CD8-positive, alpha-beta T cell (primary cell): ENCODE measurements at regions of chr18 and their contacts with region 1.

Region 1: DNA sequence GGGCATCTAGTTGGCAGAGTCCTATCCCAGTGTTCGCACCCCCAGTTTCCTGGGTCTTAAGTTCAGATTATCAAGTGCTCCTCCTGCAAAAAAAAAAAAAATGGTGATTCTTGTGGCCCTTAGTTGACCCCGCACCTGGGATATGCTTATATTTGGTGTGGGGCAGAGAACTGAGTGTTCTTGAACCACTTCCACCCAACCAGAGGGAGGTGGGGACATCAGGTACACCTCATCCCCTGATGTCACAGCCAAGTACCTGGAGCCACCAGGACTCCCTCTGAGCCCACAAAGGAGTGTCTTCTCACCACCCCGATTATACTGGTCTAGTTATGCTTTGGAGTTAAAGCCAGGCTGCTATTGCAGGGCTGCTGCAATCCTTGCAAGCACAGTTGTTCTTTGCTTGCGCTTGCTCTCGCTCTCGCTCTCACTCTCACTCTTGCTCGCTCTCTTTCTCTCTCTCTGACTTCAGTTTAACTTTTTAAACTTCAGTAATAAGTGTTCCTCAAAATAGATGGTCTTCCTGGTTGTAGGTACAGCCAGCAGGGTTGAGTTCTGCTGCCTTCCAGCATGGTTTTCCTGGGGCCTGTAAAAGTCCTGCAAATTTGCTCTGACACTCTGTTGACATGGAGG is 265.7 kb downstream of the NEDD4L start:
- DNase-seq: peak in 1 of 9 experiments; percentile 30
- ATAC-seq: no peak
- H3K4me3 ChIP-seq: no peak overlapping the region
- H3K4me3 Mint-ChIP-seq: peak overlapping the region; percentile 58
- H3K27ac ChIP-seq: no peak overlapping the region
- H3K27ac Mint-ChIP-seq: peak overlapping the region; percentile 82
- H3K4me1 ChIP-seq: peaks cover 47% of the 10 kb centered on the region
- H3K4me1 Mint-ChIP-seq: peaks cover 42% of the 10 kb centered on the region
- H3K27me3 ChIP-seq: no peaks in the 10 kb centered on the region
- H3K27me3 Mint-ChIP-seq: no peaks in the 10 kb centered on the region
- CTCF ChIP-seq: no peak

Region 2: GRCh38 chr18:58288922-58289797 is 20.6 kb before region 1 on chr18:
- CTCF ChIA-PET with region 1: no interaction called
- POLR2A ChIA-PET with region 1: no interaction called
- intact Hi-C with region 1: loop called in 1 of 2 experiments (anchors 1 kb)
- DNase-seq: no peak
- ATAC-seq: no peak
- H3K4me3 ChIP-seq: no peak overlapping the region
- H3K4me3 Mint-ChIP-seq: no peak overlapping the region
- H3K27ac ChIP-seq: no peak overlapping the region
- H3K27ac Mint-ChIP-seq: no peak overlapping the region
- H3K4me1 ChIP-seq: no peaks in the 10 kb centered on the region
- H3K4me1 Mint-ChIP-seq: no peaks in the 10 kb centered on the region
- H3K27me3 ChIP-seq: no peaks in the 10 kb centered on the region
- H3K27me3 Mint-ChIP-seq: peaks cover 3% of the 10 kb centered on the region
- CTCF ChIP-seq: no peak

Region 3: DNA sequence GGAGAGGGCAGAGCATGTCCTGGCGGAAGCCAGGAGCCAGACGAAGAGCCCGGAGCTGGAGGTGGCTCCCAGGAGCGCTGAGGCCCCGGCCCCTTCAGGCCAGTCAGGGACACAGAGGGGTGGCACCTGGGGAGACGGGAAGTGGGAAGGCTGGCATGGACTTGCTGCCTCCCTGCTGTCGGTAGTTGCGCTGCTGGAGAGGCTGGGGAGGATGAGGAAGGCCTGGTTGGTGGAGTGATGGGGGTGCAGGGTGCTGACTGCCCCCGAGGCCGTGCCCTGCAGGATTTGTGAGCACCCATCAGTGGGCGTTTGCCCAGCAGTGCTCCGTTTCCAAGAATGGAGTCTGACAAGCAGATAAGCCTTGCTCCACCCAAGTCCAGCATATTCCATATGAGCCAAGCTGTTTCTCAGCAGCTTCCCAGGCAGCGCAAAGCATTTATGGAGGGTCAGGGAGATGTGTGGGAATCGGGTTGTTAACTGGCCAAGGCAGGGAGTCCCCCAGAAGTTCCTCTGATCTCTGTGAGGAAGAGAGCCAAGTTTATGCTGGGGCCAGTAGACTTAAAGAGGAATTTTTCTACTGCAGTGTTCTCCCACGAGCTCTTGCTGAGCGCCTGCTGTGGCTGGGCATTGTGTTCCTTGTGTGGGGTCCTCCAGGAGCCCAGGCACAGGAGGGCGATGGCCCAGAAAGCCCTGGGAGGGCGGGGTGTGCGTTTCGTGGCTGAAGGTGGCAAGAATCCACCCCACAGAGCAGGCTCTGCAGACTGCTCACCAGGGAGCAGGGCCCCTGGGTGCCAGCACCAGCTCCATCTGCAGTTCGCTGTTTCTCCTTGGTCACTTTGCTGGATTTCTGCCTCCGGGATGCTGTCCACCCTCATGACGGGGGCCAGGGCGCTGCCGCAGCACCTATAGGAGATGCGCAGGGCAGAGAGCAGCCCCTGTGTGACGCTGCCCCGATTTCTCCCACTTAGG is 69.0 kb after region 1 on chr18:
- CTCF ChIA-PET with region 1: no interaction called
- POLR2A ChIA-PET with region 1: no interaction called
- intact Hi-C with region 1: no loop called
- DNase-seq: no peak
- ATAC-seq: no peak
- H3K4me3 ChIP-seq: no peak overlapping the region
- H3K4me3 Mint-ChIP-seq: no peak overlapping the region
- H3K27ac ChIP-seq: no peak overlapping the region
- H3K27ac Mint-ChIP-seq: no peak overlapping the region
- H3K4me1 ChIP-seq: no peaks in the 10 kb centered on the region
- H3K4me1 Mint-ChIP-seq: no peaks in the 10 kb centered on the region
- H3K27me3 ChIP-seq: no peaks in the 10 kb centered on the region
- H3K27me3 Mint-ChIP-seq: no peaks in the 10 kb centered on the region
- CTCF ChIP-seq: no peak

Region 4: DNA sequence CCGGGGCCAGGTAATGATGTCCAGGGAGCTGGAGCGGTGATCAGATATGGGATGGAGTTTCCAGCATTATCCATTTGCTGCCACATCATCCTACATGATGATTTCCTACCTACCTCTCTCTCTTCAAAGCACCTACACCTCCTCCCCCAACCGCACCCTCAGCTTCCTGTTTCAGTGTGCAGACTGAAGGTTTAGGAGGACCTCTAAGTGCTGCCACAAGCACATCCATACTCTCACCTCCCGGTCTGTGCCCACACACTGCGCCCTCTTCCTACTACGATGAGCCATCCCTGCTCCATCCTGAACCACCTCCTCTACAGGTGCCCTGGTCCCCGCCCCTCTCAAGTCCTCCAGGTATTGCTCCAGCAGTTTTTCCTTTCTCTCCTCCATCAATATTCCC is 195.5 kb after region 1 on chr18:
- CTCF ChIA-PET with region 1: no interaction called
- POLR2A ChIA-PET with region 1: no interaction called
- intact Hi-C with region 1: no loop called
- DNase-seq: peak in 8 of 9 experiments; percentile 15 to 71 (median 42)
- ATAC-seq: peak; percentile 81
- H3K4me3 ChIP-seq: no peak overlapping the region
- H3K4me3 Mint-ChIP-seq: no peak overlapping the region
- H3K27ac ChIP-seq: no peak overlapping the region
- H3K27ac Mint-ChIP-seq: no peak overlapping the region
- H3K4me1 ChIP-seq: peaks cover 49% of the 10 kb centered on the region
- H3K4me1 Mint-ChIP-seq: peaks cover 23% of the 10 kb centered on the region
- H3K27me3 ChIP-seq: no peaks in the 10 kb centered on the region
- H3K27me3 Mint-ChIP-seq: no peaks in the 10 kb centered on the region
- CTCF ChIP-seq: no peak